Posterior cingulate gyrus (tissue), 11 donors: ENCODE measurements at regions of chr1 and their contacts with region 1.

Region 1: DNA sequence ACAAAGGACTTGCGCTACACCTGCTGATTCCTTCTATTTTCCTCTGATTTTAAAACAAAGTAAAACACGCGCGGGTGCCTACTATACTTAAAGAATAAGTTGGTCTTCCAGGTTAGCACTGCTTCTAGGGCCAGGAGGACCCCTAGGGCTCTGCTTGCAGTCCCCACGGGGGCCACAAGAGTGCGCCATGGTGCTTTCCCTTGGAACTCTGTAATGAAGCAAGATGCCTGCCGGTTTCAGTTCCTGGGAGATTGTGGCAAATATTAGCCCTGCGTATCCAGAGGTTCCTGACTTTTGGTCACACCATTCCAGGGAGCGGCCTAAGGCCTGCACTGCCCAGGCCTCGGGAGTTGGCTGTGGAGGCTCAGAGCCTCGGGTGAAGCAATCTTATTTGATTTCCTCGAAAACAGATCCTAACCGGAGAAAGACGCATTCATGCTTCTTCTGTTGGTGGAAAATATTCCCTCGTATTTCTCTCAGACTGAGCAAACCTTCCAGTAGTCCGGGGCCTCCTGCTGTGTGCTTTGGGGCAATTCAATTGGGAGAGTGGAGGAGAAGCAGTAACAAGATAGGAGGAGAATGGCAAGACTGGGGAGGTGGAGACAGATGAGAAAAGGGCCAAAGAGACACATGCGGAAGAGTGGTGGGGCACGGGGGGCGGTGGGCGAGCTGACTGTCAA is 25.3 kb downstream of the ADAM30 start:
- DNase-seq: peak; percentile 43 to 96 (median 85)

Region 2: GRCh38 chr1:119743781-119744597 is 127.1 kb before region 1 on chr1:
- intact Hi-C with region 1: loop called (anchors 10 kb)
- DNase-seq: peak; percentile 45 to 95 (median 73)

Region 3: GRCh38 chr1:119795261-119796200 is 75.5 kb before region 1 on chr1:
- intact Hi-C with region 1: loop called (anchors 10 kb)
- DNase-seq: peak in 8 of 10 donors; percentile 11 to 87 (median 36)

Region 4: GRCh38 chr1:119964673-119965363 is 93.8 kb after region 1 on chr1:
- intact Hi-C with region 1: loop called (anchors 1 kb)
- DNase-seq: peak in 5 of 10 donors; percentile 20 to 80 (median 25)